Mammary epithelial cell (primary cell): ENCODE measurements at regions of chr4 and their contacts with region 1.

Region 1: GRCh38 chr4:86977621-86978184 is 42.9 kb downstream of the AFF1 start:
- DNase-seq: peak; percentile 99
- H3K4me3 ChIP-seq: peak overlapping the region in 1 of 3 experiments; percentile 13
- H3K27ac ChIP-seq: peak overlapping the region; percentile 99
- H3K4me1 ChIP-seq: peaks cover 22% of the 10 kb centered on the region
- H3K27me3 ChIP-seq: no peaks in the 10 kb centered on the region
- CTCF ChIP-seq: no peak

Region 2: DNA sequence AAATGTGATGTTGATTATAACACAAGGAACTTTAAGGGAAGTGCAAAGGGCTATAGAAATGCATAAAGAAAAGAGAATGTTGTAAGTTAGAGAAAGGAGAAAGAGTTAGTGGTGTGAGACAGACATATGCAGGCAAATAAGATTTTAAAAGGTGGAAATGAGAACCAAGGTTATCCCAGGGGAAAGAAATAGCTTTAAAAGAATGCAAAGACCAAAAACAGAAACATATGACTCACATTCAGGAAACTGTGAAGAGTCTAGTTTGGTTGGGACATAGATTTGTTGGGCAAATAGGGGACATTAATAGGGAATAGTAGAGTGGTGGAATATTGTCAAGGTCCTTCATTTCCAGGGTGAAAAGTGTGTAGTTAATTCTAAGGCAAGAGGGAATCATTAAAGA is 670.3 kb before region 1 on chr4:
- CTCF ChIA-PET with region 1: no interaction called
- dilution Hi-C with region 1: no loop called
- in situ Hi-C with region 1: no loop called
- intact Hi-C with region 1: no loop called
- DNase-seq: no peak
- H3K4me3 ChIP-seq: no peak overlapping the region
- H3K27ac ChIP-seq: no peak overlapping the region
- H3K4me1 ChIP-seq: no peaks in the 10 kb centered on the region
- H3K27me3 ChIP-seq: no peaks in the 10 kb centered on the region
- CTCF ChIP-seq: no peak

Region 3: GRCh38 chr4:86921608-86922252 is 56.0 kb before region 1 on chr4:
- CTCF ChIA-PET with region 1: interaction called, 4 read pairs
- dilution Hi-C with region 1: loop called (anchors 5 kb)
- in situ Hi-C with region 1: no loop called
- intact Hi-C with region 1: loop called (anchors 2 kb)
- DNase-seq: peak; percentile 68
- H3K4me3 ChIP-seq: no peak overlapping the region
- H3K27ac ChIP-seq: peak overlapping the region; percentile 92
- H3K4me1 ChIP-seq: peaks cover 55% of the 10 kb centered on the region
- H3K27me3 ChIP-seq: no peaks in the 10 kb centered on the region
- CTCF ChIP-seq: no peak

Region 4: DNA sequence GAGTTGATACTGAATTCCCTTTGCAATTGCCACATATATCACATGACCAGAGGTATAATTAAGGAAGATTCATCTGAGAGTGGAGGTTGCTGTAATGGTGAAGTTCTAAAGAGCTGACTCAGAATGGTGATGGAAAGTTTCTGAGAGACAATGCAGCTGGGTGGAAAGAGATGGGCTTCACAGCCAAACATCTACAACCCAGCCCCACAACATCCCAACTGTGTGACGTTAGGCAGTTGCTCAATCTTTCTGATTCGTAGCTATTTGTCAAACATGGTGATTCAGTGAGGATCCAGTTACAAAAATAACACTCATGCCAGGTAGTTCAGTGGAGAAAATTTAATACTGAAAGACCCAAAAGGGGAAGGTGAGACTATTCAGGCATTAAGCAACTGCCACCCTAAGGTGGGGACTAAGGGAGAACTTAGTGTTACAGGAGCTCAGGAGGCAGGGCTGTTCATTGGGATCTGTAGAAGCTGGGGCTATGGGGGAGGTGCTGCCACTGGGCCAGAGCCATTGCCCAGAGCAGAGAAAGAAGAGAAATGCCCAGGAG is 49.8 kb before region 1 on chr4:
- CTCF ChIA-PET with region 1: interaction called, 4 read pairs
- dilution Hi-C with region 1: loop called (anchors 5 kb)
- in situ Hi-C with region 1: no loop called
- intact Hi-C with region 1: loop called (anchors 2 kb)
- DNase-seq: peak; percentile 99
- H3K4me3 ChIP-seq: no peak overlapping the region
- H3K27ac ChIP-seq: peak overlapping the region; percentile 97
- H3K4me1 ChIP-seq: peaks cover 43% of the 10 kb centered on the region
- H3K27me3 ChIP-seq: no peaks in the 10 kb centered on the region
- CTCF ChIP-seq: no peak

Region 5: GRCh38 chr4:86934771-86935565 is 42.7 kb before region 1 on chr4 and contains the start of gene AFF1:
- CTCF ChIA-PET with region 1: no interaction called
- dilution Hi-C with region 1: no loop called
- in situ Hi-C with region 1: no loop called
- intact Hi-C with region 1: loop called (anchors 1 kb)
- DNase-seq: peak; percentile 90
- H3K4me3 ChIP-seq: peak within 1 kb of the TSS; percentile 81 to 99 (median 91)
- H3K27ac ChIP-seq: peak within 1 kb of the TSS; percentile 97
- H3K4me1 ChIP-seq: peaks cover 22% of the 10 kb centered on the region
- H3K27me3 ChIP-seq: no peaks in the 10 kb centered on the region
- CTCF ChIP-seq: peak in 1 of 2 donors; percentile 41
- total RNA-seq, gene AFF1: 24.8 to 48.3 TPM